ENCODE measurements at regions of chr3 and their contacts with region 1.

Region 1: DNA sequence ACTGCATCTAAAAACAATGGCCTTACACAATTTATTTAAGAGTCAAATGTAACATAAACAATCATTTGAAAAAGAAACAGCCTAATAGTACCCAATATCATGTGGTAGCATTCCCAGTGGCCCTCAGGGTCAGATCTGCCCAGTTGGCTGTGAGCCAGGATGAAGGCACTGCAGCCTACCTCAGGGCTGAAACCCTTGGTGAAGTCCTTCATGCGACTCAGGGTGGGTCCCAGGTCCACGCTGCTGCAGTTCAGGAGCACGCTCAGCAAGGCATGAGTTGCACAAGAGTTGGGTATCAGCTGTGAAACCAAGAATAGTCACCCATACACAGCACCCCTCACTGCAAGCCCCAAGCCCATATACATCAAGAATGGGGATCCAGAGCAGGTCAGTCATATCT is 37.1 kb downstream of the SEMA3G start:
- DNase-seq: no peak
- ATAC-seq: no peak
- H3K4me3 ChIP-seq: no peak overlapping the region
- H3K4me3 Mint-ChIP-seq: peak overlapping the region in 9 of 10 donors; percentile 12 to 97 (median 84)
- H3K27ac ChIP-seq: no peak overlapping the region
- H3K27ac Mint-ChIP-seq: peak overlapping the region in 7 of 9 donors; percentile 35 to 95 (median 88)
- H3K4me1 ChIP-seq: peaks cover 27 to 35% of the 10 kb centered on the region in 2 donors
- H3K4me1 Mint-ChIP-seq: peaks cover 27 to 42% (median 40%) of the 10 kb centered on the region in 7 donors
- H3K27me3 ChIP-seq: no peaks in the 10 kb centered on the region
- H3K27me3 Mint-ChIP-seq: peaks cover 0 to 1% (median 0%) of the 10 kb centered on the region in 5 donors

Region 2: DNA sequence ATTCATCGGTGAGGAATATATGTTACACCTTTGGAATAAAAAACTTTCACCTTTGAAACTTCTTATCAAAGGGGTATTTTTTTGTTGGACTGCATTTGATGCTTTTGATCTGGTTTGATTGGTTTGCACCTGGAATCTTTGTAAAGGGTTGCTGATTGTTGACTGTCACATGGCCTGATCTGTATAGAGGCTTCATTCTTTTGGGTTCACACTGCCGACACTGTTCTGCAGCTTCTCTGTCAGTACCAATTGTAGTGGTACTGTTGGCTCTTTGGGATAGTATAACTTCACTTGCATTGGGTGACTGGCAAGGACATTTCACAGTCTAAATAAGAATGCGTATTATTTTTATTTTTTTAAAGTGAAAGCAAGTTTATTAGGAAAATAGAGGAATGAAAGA is 1577.3 kb before region 1 on chr3:
- CTCF ChIA-PET with region 1: no interaction called
- POLR2A ChIA-PET with region 1: no interaction called
- intact Hi-C with region 1: no loop called
- DNase-seq: no peak
- ATAC-seq: no peak
- H3K4me3 ChIP-seq: no peak overlapping the region
- H3K4me3 Mint-ChIP-seq: no peak overlapping the region
- H3K27ac ChIP-seq: no peak overlapping the region
- H3K27ac Mint-ChIP-seq: no peak overlapping the region
- H3K4me1 ChIP-seq: no peaks in the 10 kb centered on the region
- H3K4me1 Mint-ChIP-seq: peaks cover 0 to 12% (median 0%) of the 10 kb centered on the region in 7 donors
- H3K27me3 ChIP-seq: no peaks in the 10 kb centered on the region
- H3K27me3 Mint-ChIP-seq: peaks cover 0 to 14% (median 7%) of the 10 kb centered on the region in 5 donors

Region 3: DNA sequence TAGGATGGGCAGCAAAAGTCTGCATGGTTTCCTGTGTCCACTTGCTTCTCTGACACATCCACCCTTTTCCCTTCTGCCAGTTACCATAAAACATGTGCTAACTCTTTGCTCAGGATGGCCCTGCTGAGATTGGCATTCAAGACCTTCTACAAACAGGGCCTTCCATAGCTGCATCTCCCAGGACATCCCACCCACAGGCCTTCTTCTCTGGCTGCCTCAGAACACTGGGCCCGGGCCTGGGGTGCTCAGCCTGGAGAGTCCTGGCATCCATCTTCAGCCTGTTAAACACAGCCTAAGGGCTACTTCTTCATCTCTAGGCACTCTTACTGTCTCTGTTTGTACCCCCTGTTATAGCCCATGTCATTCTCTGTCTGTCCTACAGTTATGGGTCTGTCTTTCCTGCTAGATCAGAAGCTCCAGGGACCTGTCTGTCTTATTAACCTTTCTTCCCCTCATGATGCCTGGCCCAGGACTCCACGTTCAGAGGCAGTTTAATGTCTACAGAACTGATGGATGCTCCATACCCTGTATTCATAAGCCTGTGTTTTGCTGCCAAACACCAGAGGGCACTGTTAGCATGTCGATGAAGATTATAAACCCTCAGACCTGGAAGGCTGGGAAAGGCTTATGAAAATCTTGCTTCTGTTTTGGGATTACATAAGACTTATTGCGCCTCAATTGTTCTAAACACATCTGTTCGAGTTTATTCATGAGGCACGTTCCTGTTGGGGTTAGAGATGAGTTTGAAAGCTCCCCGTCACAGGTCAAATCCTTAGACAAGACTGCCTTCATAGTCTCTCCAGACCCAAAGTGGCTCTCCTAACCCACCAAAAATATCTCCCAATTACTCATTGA is 20.6 kb after region 1 on chr3:
- CTCF ChIA-PET with region 1: interaction called, 4 read pairs
- POLR2A ChIA-PET with region 1: interaction called, 5 read pairs
- intact Hi-C with region 1: loop called in 1 of 2 experiments (anchors 1 kb)
- DNase-seq: peak in 5 of 9 donors; percentile 21 to 43 (median 28)
- ATAC-seq: peak; percentile 78
- H3K4me3 ChIP-seq: no peak overlapping the region
- H3K4me3 Mint-ChIP-seq: no peak overlapping the region
- H3K27ac ChIP-seq: no peak overlapping the region
- H3K27ac Mint-ChIP-seq: peak overlapping the region in 1 of 9 donors; percentile 57
- H3K4me1 ChIP-seq: no peaks in the 10 kb centered on the region
- H3K4me1 Mint-ChIP-seq: peaks cover 0 to 5% (median 0%) of the 10 kb centered on the region in 7 donors
- H3K27me3 ChIP-seq: no peaks in the 10 kb centered on the region
- H3K27me3 Mint-ChIP-seq: peaks cover 0 to 20% (median 0%) of the 10 kb centered on the region in 5 donors

Region 4: DNA sequence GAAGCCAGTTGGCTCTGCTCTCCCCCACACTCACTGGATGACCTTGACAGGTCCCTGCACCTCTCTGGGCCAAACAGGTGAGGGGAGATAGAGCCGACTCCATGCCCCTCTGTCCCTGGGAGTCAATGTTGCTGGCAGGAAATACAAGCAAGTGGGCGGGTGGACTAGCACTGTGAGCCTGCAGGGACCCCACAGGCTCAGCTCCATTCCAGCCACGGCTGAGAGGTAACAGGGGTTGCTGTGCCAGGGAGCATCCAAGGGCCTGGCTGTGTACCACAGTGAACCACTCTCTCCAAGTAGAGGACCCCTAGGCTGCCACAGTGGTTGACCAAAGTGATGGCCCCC is 42.7 kb after region 1 on chr3:
- CTCF ChIA-PET with region 1: interaction called, 40 read pairs
- POLR2A ChIA-PET with region 1: interaction called, 5 read pairs
- intact Hi-C with region 1: loop called (anchors 1 kb)
- DNase-seq: no peak
- ATAC-seq: no peak
- H3K4me3 ChIP-seq: no peak overlapping the region
- H3K4me3 Mint-ChIP-seq: no peak overlapping the region
- H3K27ac ChIP-seq: no peak overlapping the region
- H3K27ac Mint-ChIP-seq: no peak overlapping the region
- H3K4me1 ChIP-seq: peaks cover 10 to 20% of the 10 kb centered on the region in 2 donors
- H3K4me1 Mint-ChIP-seq: peaks cover 16 to 24% (median 21%) of the 10 kb centered on the region in 7 donors
- H3K27me3 ChIP-seq: no peaks in the 10 kb centered on the region
- H3K27me3 Mint-ChIP-seq: no peaks in the 10 kb centered on the region

Region 5: DNA sequence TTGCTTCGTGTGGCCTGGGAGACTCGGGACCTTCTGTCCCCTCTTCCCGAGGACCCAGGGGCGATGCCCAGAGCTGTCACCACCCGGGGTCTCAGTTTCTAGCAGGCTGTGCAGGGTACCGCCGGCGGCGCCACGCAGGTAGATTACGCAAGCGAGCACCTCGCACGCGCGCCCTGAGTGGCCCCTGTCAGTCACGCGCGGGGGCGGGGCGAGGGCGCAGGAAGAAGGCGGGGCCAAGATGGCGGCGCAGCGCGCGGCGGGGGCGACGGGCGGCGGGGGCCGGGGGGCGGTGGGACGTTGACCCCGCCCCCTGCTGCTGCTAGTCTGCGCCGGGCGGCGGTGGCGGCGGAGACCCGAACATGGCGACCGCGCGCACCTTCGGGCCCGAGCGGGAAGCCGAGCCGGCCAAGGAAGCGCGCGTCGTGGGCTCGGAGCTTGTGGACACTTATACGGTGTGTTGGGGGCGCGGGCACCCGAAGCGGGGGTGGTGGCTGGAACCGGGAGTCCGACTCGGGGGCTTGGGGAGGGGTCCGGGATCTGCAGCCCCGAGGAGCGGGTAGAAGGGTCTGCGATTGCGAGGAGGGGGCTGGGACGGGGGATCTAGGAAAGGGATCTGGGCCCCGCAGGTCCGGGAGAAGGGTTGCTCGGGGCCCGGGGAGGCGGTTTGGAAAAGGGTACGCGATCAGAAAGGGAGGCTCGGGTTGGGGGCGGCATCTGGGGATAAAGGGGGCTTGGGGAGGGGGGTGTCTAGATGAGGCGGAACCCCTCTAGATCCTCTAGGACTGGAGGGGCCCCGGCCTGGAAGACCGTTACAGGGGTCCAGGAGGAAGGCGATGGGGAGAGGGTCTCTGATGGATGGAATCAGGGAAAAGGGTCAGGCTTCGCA is 47.7 kb after region 1 on chr3 and contains the start of gene NISCH:
- CTCF ChIA-PET with region 1: interaction called, 11 read pairs
- POLR2A ChIA-PET with region 1: interaction called, 5 read pairs
- intact Hi-C with region 1: no loop called
- DNase-seq: peak; percentile 92 to 99 (median 97)
- ATAC-seq: peak; percentile 98
- H3K4me3 ChIP-seq: peak within 1 kb of the TSS; percentile 98
- H3K4me3 Mint-ChIP-seq: peak within 1 kb of the TSS; percentile 87 to 96 (median 93)
- H3K27ac ChIP-seq: peak within 1 kb of the TSS; percentile 88
- H3K27ac Mint-ChIP-seq: peak within 1 kb of the TSS; percentile 96 to 100 (median 99)
- H3K4me1 ChIP-seq: peaks cover 15 to 23% of the 10 kb centered on the region in 2 donors
- H3K4me1 Mint-ChIP-seq: peaks cover 25 to 47% (median 41%) of the 10 kb centered on the region in 7 donors
- H3K27me3 ChIP-seq: no peaks in the 10 kb centered on the region
- H3K27me3 Mint-ChIP-seq: no peaks in the 10 kb centered on the region
- total RNA-seq, gene NISCH: 86.8 to 210 (median 162) TPM

Region 6: DNA sequence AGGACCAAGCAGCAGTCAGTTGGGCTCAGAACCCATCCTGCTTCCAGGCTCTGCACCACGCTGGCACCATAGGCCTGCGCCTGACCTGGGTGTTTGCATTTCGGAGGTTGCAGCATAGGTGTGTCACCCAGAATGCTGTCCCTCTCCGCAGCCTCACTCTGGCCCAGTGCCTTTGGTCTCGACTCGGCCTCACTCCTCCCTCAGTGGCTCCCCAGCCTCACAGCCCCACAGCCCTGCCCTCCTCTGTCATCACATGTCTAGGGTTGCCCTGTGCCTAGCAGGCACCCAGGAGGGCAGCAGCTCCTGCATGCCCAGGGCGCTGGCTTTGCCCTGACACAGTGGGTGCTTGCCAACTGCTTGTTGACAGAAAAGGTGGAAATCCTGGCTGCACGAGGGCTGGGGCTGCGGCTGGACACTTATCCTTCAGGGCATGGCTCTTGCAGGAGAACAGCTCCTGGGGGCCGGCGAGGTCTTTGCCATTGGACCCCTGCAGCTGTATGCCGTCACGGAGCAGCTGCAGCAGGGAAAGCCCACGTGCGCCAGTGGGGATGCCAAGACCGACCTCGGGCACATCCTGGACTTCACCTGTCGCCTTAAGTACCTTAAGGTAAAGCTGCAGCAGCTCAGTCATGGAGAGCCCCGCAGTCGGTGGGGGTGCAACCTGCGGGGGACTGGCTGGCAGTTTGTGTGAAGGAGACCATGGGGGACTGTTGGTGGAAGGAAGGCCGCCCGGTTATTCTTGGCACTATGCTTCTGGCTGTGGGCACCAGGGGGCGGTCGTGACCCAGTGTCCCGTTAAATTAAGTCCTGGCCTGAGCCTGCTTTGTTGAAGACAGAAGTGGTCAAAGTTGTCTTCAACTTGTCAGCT is 63.8 kb after region 1 on chr3:
- CTCF ChIA-PET with region 1: interaction called, 10 read pairs
- POLR2A ChIA-PET with region 1: no interaction called
- intact Hi-C with region 1: no loop called
- DNase-seq: peak in 4 of 9 donors; percentile 9 to 45 (median 16)
- ATAC-seq: peak; percentile 67
- H3K4me3 ChIP-seq: no peak overlapping the region
- H3K4me3 Mint-ChIP-seq: no peak overlapping the region
- H3K27ac ChIP-seq: no peak overlapping the region
- H3K27ac Mint-ChIP-seq: peak overlapping the region in 1 of 9 donors; percentile 25
- H3K4me1 ChIP-seq: no peaks in the 10 kb centered on the region
- H3K4me1 Mint-ChIP-seq: peaks cover 4 to 8% (median 6%) of the 10 kb centered on the region in 7 donors
- H3K27me3 ChIP-seq: no peaks in the 10 kb centered on the region
- H3K27me3 Mint-ChIP-seq: no peaks in the 10 kb centered on the region